Activated CD4-positive, alpha-beta memory T cell treated with anti-CD3 and anti-CD28 coated beads, Interleukin-2, amount 10 ng/mL, durations not matched to agents 7 days and 5 days (primary cell): ENCODE measurements at regions of chr9 and their contacts with region 1.

Region 1: GRCh38 chr9:2053883-2054845 is 39.0 kb downstream of the SMARCA2 start:
- DNase-seq: peak; percentile 87
- H3K4me3 Mint-ChIP-seq: peak overlapping the region; percentile 34
- H3K27ac Mint-ChIP-seq: peak overlapping the region; percentile 90
- H3K4me1 Mint-ChIP-seq: peaks cover 45% of the 10 kb centered on the region
- H3K27me3 Mint-ChIP-seq: no peaks in the 10 kb centered on the region

Region 2: DNA sequence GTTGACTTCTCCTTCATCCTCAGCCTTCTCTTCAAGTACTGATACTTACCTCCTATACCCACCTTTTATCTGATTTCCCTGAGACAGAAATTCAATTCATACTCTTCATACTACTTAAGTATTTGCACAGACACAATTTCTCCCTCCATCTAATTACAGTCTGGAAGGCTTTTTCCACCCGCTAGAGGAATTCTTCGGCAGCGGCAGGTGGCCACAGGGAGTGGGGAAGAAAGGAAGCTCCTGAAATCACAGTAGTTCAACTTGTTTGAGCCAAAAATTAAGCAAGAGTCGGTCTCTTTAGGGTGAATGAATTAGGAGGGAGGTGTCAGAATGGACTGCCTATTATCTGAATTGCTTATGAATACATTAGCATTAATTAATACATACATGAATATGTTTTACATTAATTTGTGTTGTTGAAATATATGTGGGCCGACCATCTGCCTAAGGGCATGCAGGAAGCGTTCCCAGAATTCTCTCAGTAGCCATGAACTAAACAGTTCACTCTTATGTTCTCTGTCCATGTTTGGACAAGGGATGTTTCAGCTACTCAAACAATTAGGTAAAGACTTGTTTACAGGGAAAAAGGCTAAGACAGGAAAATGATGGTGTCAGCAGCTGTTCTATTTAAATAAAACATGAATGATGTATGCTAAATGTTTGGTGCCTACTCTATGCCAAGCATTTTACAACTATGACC is 140.4 kb before region 1 on chr9:
- CTCF ChIA-PET with region 1: no interaction called
- POLR2A ChIA-PET with region 1: no interaction called
- DNase-seq: no peak
- H3K4me3 Mint-ChIP-seq: no peak overlapping the region
- H3K27ac Mint-ChIP-seq: no peak overlapping the region
- H3K4me1 Mint-ChIP-seq: no peaks in the 10 kb centered on the region
- H3K27me3 Mint-ChIP-seq: peaks cover 5% of the 10 kb centered on the region

Region 3: DNA sequence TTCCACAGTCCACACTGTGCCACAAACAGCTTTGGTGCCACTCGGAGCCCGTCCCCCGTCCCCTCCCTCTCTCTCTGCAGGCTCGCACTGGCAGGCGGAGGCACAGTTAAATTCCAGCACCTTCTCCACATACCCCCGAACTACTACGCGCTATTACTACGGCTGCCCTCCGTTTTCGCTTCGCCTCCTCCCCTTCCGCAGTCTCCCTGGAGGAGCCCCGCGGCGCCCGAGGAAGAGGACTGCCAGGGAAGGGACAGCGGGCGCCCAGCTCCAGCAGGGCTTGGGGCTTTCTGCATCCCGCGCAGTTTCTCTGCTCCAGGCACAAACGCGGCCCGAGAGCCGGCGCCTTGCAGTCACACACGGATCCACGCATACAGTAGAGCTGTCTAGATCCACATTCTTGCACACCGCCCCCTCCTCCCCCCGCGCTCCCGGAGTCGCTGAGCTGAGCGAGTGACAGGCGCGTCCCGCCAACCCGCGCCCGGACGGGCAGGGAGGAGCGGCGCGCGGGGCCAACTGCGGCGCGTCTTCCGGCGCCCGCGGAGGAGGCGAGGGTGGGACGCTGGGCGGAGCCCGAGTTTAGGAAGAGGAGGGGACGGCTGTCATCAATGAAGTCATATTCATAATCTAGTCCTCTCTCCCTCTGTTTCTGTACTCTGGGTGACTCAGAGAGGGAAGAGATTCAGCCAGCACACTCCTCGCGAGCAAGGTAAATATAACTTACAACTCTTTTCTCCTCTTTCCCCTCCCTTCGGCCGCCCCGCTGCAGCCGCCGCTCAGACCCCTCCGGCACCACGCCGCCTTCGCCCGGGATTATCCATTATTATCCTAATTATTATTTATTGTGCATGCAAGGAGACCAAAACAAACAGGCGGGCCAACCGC is 39.2 kb before region 1 on chr9 and contains the start of gene SMARCA2:
- CTCF ChIA-PET with region 1: interaction called, 5 read pairs
- POLR2A ChIA-PET with region 1: interaction called, 114 read pairs
- DNase-seq: peak; percentile 97
- H3K4me3 Mint-ChIP-seq: peak within 1 kb of the TSS; percentile 98
- H3K27ac Mint-ChIP-seq: peak within 1 kb of the TSS; percentile 100
- H3K4me1 Mint-ChIP-seq: peaks cover 44% of the 10 kb centered on the region
- H3K27me3 Mint-ChIP-seq: peaks cover 17% of the 10 kb centered on the region
- total RNA-seq, gene SMARCA2: 207 to 224 TPM

Region 4: DNA sequence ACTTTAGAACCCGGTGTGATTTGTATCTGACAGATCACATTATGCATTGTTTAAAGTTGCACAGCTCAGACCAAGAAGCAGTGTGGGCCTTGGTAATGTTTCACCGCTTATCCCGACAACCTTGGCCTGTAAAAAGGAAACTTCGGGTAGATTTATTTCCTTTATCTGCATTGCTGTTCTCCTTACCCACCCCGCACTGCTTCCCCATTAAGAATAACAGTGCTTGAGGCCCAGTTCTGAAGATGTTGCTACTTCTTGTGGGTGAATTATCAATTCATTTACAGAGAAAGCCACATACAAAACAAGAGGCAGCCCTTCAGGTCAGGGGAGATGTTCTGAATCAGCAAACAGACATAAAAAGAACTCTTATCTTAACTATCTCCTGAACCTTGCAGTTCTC is 30.6 kb before region 1 on chr9:
- CTCF ChIA-PET with region 1: interaction called, 11 read pairs
- POLR2A ChIA-PET with region 1: interaction called, 114 read pairs
- DNase-seq: peak; percentile 32
- H3K4me3 Mint-ChIP-seq: peak overlapping the region; percentile 59
- H3K27ac Mint-ChIP-seq: peak overlapping the region; percentile 97
- H3K4me1 Mint-ChIP-seq: peaks cover 95% of the 10 kb centered on the region
- H3K27me3 Mint-ChIP-seq: no peaks in the 10 kb centered on the region